A549 (cell line): ENCODE measurements at regions of chr16 and their contacts with region 1.

Region 1: DNA sequence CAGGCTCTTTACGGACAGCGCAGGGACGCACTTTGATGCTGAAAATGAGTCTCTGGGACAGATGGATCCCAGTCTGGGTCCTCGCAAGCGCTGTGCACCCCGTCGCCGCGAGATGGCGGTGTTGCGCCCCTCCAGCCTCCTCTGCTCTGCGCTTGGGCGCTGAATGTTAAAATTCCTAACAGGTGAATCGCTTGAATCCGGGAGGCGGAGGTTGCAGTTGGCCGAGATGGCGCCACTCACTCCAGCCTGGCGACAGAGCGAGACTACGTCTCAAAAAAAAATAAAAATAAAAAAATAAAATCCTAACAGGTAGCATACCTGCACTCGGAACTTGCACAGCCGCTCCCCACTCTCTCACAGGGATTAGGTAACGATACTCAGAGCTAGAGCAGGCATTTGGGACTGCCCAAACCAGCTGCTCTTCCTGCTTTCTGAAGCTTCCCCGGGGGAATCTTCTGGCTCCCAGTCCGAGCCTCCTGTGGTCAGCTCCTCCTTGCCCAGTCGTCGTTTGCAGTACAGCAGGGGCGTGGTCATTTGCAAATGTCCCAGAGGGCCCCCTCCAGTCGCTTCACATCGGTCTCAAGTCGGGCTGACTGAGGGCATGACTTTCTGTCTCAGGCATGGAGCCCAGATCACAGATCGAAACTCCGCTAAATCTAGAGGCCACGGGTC is 26.2 kb upstream of the OSGIN1 start:
- DNase-seq: peak; percentile 81 to 89
- ATAC-seq: peak; percentile 80 to 94
- H3K4me3 ChIP-seq: peak overlapping the region; percentile 42
- H3K27ac ChIP-seq: peak overlapping the region; percentile 75 to 86
- H3K4me1 ChIP-seq: peaks cover 6% of the 10 kb centered on the region
- CTCF ChIP-seq: peak; percentile 91
- EP300 ChIP-seq: no peak
- POLR2A ChIP-seq: no peak
- RAD21 ChIP-seq: peak; percentile 80 to 86

Region 2: GRCh38 chr16:83913245-83913633 is 13.6 kb before region 1 on chr16:
- CTCF ChIA-PET with region 1: interaction called, 28 read pairs
- POLR2A ChIA-PET with region 1: no interaction called
- DNase-seq: no peak
- ATAC-seq: no peak
- H3K4me3 ChIP-seq: no peak overlapping the region
- H3K27ac ChIP-seq: no peak overlapping the region
- H3K4me1 ChIP-seq: no peaks in the 10 kb centered on the region
- CTCF ChIP-seq: no peak
- EP300 ChIP-seq: no peak
- POLR2A ChIP-seq: no peak
- RAD21 ChIP-seq: no peak

Region 3: GRCh38 chr16:83939266-83939855 is 12.5 kb after region 1 on chr16:
- CTCF ChIA-PET with region 1: interaction called, 54 read pairs
- POLR2A ChIA-PET with region 1: no interaction called
- DNase-seq: no peak
- ATAC-seq: no peak
- H3K4me3 ChIP-seq: no peak overlapping the region
- H3K27ac ChIP-seq: no peak overlapping the region
- H3K4me1 ChIP-seq: peaks cover 3% of the 10 kb centered on the region; the same call in 1 of the 3 replicates
- CTCF ChIP-seq: no peak
- EP300 ChIP-seq: no peak
- POLR2A ChIP-seq: no peak
- RAD21 ChIP-seq: no peak